Right ventricle myocardium inferior (tissue), 1 donor: ENCODE measurements at regions of chr11 and their contacts with region 1.

Region 1: GRCh38 chr11:34899633-34900016 is 16.6 kb downstream of the APIP start:
- DNase-seq: no peak
- ATAC-seq: no peak

Region 2: GRCh38 chr11:34512840-34513681 is 386.6 kb before region 1 on chr11:
- intact Hi-C with region 1: loop called (anchors 5 kb)
- DNase-seq: no peak
- ATAC-seq: peak; percentile 81